ENCODE measurements at regions of chr6 and their contacts with region 1.

Region 1: GRCh38 chr6:30006170-30007131 is 54.6 kb upstream of the POLR1H start:
- DNase-seq: peak; percentile 68
- H3K4me3 Mint-ChIP-seq: peak overlapping the region; percentile 74
- H3K27ac Mint-ChIP-seq: no peak overlapping the region
- H3K4me1 Mint-ChIP-seq: peaks cover 6% of the 10 kb centered on the region
- H3K27me3 Mint-ChIP-seq: peaks cover 32% of the 10 kb centered on the region

Region 2: DNA sequence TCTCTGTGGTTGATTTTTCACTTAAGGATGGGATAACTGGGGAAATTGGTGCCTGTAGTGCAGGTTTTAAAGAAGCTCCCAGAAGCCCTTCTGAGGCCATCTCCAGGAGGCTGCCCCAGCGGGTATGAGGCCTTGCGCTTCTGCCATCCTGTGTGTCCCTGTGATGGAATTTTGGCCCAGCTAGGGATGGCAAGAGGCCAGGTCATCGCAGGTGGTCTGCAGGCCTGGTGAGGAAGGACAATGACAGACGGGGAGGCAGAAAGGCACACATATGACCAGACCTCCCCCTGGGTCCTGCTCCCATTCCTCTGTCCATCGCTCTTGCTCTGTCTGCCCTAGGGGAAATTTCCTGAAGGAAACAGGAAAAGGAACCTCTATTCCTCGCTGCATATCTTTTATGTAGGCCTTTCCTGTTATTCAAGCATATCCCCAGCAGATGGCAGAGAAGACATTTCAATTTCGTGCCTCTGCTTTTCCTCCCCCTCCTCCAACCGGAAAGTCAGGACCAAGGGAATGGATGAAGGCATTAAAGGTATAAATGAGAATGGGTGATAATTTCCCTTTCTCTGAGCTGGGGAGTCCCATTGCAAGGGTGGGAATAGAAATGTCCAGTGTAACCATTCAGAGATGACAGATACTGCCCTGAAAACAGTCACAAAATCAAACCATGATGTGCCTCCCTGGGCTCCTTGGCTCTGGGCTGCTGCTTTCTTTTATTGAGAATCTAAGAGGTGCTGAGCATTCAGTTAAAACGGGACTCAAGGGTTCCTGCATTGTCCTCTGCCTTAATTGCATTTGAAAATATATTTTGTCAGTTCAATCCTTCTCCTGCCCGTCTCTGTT is 300.8 kb before region 1 on chr6:
- intact Hi-C with region 1: loop called (anchors 10 kb)
- DNase-seq: peak; percentile 67
- H3K4me3 Mint-ChIP-seq: no peak overlapping the region
- H3K27ac Mint-ChIP-seq: no peak overlapping the region
- H3K4me1 Mint-ChIP-seq: peaks cover 40% of the 10 kb centered on the region
- H3K27me3 Mint-ChIP-seq: peaks cover 26% of the 10 kb centered on the region